Activated naive CD4-positive, alpha-beta T cell treated with anti-CD3 and anti-CD28 coated beads, Interleukin-2, amount 10 ng/mL, durations not matched to agents 7 days and 5 days (primary cell): ENCODE measurements at regions of chr12 and their contacts with region 1.

Region 1: GRCh38 chr12:9741726-9742125 is 8.8 kb upstream of the CLECL1 start:
- DNase-seq: peak; percentile 89
- H3K4me3 Mint-ChIP-seq: peak overlapping the region; percentile 88
- H3K27ac Mint-ChIP-seq: peak overlapping the region; percentile 100
- H3K4me1 Mint-ChIP-seq: peaks cover 75% of the 10 kb centered on the region
- H3K27me3 Mint-ChIP-seq: peaks cover 4% of the 10 kb centered on the region

Region 2: DNA sequence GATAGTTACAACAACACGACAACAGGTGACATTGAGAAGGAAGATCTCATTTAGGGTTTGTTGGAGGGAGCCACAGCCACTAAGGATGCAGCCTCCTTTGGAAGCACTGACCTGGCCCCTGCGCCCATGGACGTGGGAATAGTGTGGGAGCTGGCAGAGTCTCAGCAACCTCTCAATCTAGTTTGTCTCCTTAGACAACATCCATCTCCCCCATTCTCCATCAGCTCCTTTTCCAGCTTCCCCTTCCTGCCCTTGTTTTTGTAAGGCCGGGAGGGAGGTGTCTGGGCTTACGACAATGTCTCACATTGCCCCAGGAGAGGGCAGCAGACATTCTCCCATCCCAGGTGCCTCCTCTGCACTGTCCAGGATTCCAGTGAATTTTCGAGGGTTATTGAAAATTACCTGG is 363.3 kb before region 1 on chr12:
- CTCF ChIA-PET with region 1: no interaction called
- DNase-seq: no peak
- H3K4me3 Mint-ChIP-seq: no peak overlapping the region
- H3K27ac Mint-ChIP-seq: no peak overlapping the region
- H3K4me1 Mint-ChIP-seq: peaks cover 4% of the 10 kb centered on the region
- H3K27me3 Mint-ChIP-seq: no peaks in the 10 kb centered on the region

Region 3: DNA sequence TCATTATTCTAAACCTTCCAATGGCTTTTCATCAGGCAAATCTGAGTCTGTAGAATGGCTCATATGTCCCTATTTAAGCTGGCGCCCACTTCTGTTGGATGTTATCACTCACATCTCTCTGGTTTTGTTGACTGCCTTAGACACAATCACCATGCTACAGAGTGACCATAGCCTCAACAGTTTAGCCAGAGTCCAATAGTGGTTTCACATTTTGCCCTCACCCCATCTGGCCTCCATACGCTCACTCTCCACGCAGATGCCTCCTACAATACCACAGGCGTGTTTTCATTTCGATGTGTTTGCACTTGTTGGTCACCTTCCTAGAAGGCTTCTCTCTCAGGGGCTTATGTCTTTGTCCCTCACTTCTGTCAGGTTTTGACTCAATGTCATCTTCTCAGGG is 137.4 kb before region 1 on chr12:
- CTCF ChIA-PET with region 1: no interaction called
- DNase-seq: no peak
- H3K4me3 Mint-ChIP-seq: no peak overlapping the region
- H3K27ac Mint-ChIP-seq: no peak overlapping the region
- H3K4me1 Mint-ChIP-seq: peaks cover 12% of the 10 kb centered on the region
- H3K27me3 Mint-ChIP-seq: peaks cover 4% of the 10 kb centered on the region

Region 4: DNA sequence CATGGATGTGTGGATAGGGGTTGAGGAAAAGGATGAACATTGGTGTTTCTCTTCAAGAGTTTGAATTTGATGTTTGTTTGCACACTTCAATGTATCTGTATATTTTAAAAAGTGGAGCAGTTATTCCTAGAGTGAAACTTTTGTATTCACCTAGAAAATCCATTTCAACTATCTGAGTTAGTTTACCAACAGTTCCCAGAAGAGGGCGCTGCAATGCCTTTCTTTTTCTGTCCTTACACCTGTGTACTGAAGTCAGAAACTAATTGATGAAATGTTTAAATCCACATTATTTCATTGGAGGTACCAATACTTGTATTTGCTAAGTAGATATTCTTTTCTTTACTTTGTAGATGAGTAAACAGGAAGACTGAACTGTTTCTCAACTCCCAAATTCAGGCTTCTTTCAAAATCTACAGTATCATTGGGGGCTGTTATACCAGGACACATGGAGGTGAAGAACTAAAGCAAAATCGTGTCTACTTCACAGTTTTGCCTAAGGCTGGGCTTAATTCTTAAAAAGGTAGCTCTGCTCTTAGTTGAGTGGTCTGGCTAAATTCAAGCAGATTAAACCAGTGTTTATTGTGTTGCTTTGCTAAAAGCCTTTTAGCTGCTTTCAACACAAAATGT is 107.4 kb before region 1 on chr12:
- CTCF ChIA-PET with region 1: interaction called, 25 read pairs
- DNase-seq: peak; percentile 87
- H3K4me3 Mint-ChIP-seq: no peak overlapping the region
- H3K27ac Mint-ChIP-seq: peak overlapping the region; percentile 4
- H3K4me1 Mint-ChIP-seq: peaks cover 66% of the 10 kb centered on the region
- H3K27me3 Mint-ChIP-seq: peaks cover 4% of the 10 kb centered on the region

Region 5: GRCh38 chr12:9760699-9761418 is 19.1 kb after region 1 on chr12 and contains the start of gene CD69:
- CTCF ChIA-PET with region 1: interaction called, 15 read pairs
- DNase-seq: peak; percentile 89
- H3K4me3 Mint-ChIP-seq: peak within 1 kb of the TSS; percentile 98
- H3K27ac Mint-ChIP-seq: peak within 1 kb of the TSS; percentile 98
- H3K4me1 Mint-ChIP-seq: peaks cover 43% of the 10 kb centered on the region
- H3K27me3 Mint-ChIP-seq: no peaks in the 10 kb centered on the region

Region 6: GRCh38 chr12:9869307-9870161 is 127.8 kb after region 1 on chr12 and contains the start of gene CLEC2B:
- CTCF ChIA-PET with region 1: interaction called, 10 read pairs
- DNase-seq: peak; percentile 56
- H3K4me3 Mint-ChIP-seq: peak within 1 kb of the TSS; percentile 73
- H3K27ac Mint-ChIP-seq: peak within 1 kb of the TSS; percentile 99
- H3K4me1 Mint-ChIP-seq: peaks cover 22% of the 10 kb centered on the region
- H3K27me3 Mint-ChIP-seq: no peaks in the 10 kb centered on the region